ENCODE measurements at regions of chr7 and their contacts with region 1.

Region 1: DNA sequence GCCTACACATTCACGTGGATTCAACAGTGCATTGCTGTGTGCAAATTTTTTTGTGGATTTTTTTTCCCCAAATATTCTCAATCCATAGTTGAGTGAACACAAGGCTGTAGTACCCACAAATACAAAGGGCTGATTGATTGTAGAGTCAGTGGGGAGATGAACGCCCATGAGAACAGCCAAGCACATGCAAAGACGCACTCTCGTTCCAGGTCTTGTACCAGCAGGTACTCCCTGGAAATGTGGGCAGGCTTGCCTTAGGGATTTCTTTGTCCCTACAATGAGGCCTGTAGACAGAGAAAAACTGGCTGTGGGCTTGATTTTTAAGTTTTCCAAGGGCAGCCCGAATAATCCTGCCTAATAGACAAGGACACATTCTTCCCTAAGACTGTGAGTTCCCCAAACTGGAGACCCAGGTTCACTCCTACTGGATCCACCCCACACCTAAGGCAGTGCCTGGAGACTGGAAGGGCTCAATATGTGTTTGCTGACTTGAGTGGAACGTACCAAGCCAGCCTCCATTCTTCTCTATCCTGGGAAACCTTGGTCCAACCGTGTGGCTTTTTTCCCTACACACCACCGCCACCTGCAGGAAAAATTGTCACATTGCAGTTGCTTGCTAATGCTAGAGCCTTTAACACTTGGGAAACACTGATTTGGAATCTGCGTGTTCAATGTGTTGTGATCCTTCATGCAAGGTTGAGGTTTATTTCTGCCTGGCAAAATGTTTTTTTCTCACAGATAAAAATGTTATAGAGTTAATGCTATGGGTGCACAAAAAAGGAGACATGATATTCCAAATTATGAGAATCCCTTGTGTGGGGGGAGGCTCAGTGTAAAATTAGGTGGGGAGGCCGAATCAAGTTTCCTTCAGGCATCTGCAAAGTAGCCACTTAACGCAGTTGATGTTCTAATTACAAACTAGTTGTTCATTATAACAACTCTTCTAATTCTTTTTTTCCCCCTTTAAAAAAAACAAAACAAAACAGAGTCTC is 49.3 kb downstream of the PPP1R17 start:
- DNase-seq: peak; percentile 59 to 84 (median 74)
- H3K4me3 ChIP-seq: peak overlapping the region in 42 of 59 donors; percentile 3 to 59 (median 33)
- H3K27ac ChIP-seq: peak overlapping the region in 8 of 59 donors; percentile 10 to 54 (median 40)
- H3K27me3 ChIP-seq: no peaks in the 10 kb centered on the region
- CTCF ChIP-seq: peak; percentile 86 to 99 (median 96)

Region 2: DNA sequence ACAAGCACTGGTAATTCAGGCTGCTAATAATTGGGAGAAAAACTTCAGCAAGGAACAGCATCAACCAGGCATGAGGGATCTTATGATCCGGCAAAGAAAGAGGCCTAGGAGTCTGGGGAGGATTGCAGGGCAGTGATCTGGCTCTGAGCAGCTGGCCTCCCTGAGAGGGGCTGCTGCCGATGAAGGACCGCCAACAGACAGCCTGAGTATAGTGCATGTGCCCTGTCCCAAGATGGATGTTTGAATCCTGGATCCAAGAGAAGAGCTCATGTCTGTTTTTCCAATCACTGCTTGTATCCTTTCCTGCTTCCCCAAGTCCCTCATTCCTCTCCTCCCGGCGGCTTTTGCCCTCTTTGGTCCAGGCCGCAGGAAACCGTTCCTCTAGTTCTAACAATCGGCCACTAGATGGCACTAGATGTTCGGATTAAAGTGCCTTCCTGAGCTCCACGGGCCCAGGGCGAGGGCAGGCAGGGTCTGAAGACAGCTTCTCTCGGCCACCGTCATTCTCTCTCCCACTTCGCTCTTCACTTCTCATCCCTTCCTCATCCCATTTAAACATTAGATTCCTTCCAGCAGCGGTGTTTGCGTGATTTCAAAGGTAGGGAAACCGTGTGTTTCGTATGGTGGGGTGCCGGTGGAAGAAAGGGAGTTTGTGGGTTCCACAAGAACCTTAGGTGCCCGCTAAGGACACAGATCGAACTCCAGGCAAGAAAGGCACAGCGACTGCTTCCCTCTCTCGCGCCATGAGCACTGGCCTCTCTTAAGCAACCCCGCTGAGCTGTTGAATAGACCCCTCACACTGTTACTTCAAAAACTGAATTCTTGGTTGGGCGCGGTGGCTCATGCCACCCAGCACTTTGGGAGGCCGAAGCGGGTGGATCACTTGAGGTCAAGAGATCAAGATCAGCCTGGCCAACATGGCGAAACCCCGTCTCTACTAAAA is 601.8 kb before region 1 on chr7:
- intact Hi-C with region 1: loop called in 1 of 2 experiments (anchors 2 kb)
- DNase-seq: peak; percentile 37 to 80 (median 62)
- H3K4me3 ChIP-seq: peak overlapping the region in 9 of 59 donors; percentile 0 to 41 (median 28)
- H3K27ac ChIP-seq: no peak overlapping the region
- H3K27me3 ChIP-seq: peaks cover 0 to 4% (median 0%) of the 10 kb centered on the region in 45 donors
- CTCF ChIP-seq: peak; percentile 52 to 89 (median 78)

Region 3: GRCh38 chr7:31145339-31145738 is 590.9 kb before region 1 on chr7:
- intact Hi-C with region 1: loop called in 1 of 2 experiments (anchors 10 kb)
- DNase-seq: no peak
- H3K4me3 ChIP-seq: no peak overlapping the region
- H3K27ac ChIP-seq: no peak overlapping the region
- H3K27me3 ChIP-seq: peaks cover 0 to 22% (median 0%) of the 10 kb centered on the region in 45 donors
- CTCF ChIP-seq: no peak

Region 4: DNA sequence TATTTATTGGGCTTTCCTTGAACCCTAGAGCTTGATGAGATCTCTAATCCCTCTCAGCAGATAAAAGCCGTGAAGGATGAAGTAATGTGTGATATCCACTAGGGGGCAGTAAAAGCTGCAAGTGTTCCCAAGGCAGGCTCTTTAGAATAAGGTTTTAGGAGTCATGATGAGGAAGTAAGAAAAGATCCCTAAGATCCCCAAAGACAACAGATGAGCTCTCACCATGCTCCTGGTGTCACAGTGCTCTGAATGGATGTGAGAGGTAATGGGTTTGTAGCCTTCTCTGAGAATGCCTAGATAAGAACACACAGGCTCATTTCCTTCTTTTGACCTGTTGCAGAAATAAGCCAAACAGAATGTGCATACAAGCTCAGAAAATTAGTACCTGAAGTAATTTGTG is 292.8 kb before region 1 on chr7:
- intact Hi-C with region 1: loop called (anchors 1 to 10 kb)
- DNase-seq: peak in 1 of 10 donors; percentile 18
- H3K4me3 ChIP-seq: no peak overlapping the region
- H3K27ac ChIP-seq: no peak overlapping the region
- H3K27me3 ChIP-seq: peaks cover 0 to 20% (median 0%) of the 10 kb centered on the region in 45 donors
- CTCF ChIP-seq: peak; percentile 70 to 93 (median 85)

Region 5: DNA sequence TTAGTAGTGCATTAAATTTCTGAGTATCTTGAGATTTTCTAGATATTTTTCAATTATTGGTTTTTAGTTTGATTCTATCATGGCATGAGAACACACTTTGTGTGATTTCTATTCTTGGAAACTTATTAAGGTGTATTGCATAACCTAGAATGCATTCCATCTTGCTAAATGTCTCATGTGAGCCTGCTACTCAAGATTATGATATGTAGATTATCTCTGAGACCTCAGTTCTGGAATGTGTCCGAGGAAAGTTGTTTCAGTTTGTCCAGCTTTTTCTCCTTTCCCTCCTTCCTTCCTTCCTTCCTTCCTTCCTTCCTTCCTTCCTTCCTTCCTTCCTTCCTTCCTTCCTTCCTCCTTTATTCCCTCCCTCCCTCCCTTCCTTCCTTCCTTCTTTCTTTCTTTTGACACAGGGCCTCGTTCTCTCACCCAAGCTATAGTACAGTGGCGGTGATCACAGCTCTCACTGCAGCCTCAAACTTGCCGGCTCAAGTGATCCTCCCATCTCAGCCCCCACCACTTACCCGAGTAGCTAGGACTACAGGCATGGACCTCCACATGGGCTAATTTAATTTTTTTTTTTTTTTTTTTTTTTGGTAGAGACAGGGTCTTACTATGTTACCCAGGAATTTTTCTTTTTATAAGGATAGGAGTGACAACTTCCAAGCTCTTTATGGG is 214.8 kb before region 1 on chr7:
- intact Hi-C with region 1: no loop called
- DNase-seq: no peak
- H3K4me3 ChIP-seq: no peak overlapping the region
- H3K27ac ChIP-seq: no peak overlapping the region
- H3K27me3 ChIP-seq: peaks cover 0 to 3% (median 0%) of the 10 kb centered on the region in 45 donors
- CTCF ChIP-seq: no peak

Region 6: GRCh38 chr7:31648288-31648687 is 88.0 kb before region 1 on chr7:
- intact Hi-C with region 1: loop called (anchors 2 to 5 kb)
- DNase-seq: no peak
- H3K4me3 ChIP-seq: no peak overlapping the region
- H3K27ac ChIP-seq: no peak overlapping the region
- H3K27me3 ChIP-seq: peaks cover 0 to 4% (median 0%) of the 10 kb centered on the region in 45 donors
- CTCF ChIP-seq: peak in 54 of 56 donors; percentile 23 to 74 (median 53)

Region 7: GRCh38 chr7:32015133-32015532 is 278.8 kb after region 1 on chr7:
- intact Hi-C with region 1: no loop called
- DNase-seq: no peak
- H3K4me3 ChIP-seq: no peak overlapping the region
- H3K27ac ChIP-seq: no peak overlapping the region
- H3K27me3 ChIP-seq: no peaks in the 10 kb centered on the region
- CTCF ChIP-seq: no peak

Region 8: GRCh38 chr7:32347244-32347828 is 611.0 kb after region 1 on chr7:
- intact Hi-C with region 1: loop called (anchors 10 kb)
- DNase-seq: peak in 1 of 10 donors; percentile 46
- H3K4me3 ChIP-seq: no peak overlapping the region
- H3K27ac ChIP-seq: no peak overlapping the region
- H3K27me3 ChIP-seq: no peaks in the 10 kb centered on the region
- CTCF ChIP-seq: peak; percentile 54 to 89 (median 74)